PC-3 (cell line): ENCODE measurements at regions of chr12 and their contacts with region 1.

Region 1: GRCh38 chr12:17853054-17853453 is 236.9 kb downstream of the RERGL start:
- DNase-seq: no peak
- ATAC-seq: no peak
- H3K4me3 ChIP-seq: no peak overlapping the region
- H3K27ac ChIP-seq: no peak overlapping the region
- H3K4me1 ChIP-seq: no peaks in the 10 kb centered on the region
- H3K27me3 ChIP-seq: no peaks in the 10 kb centered on the region
- CTCF ChIP-seq: no peak

Region 2: GRCh38 chr12:17763366-17763765 is 89.7 kb before region 1 on chr12:
- CTCF ChIA-PET with region 1: no interaction called
- POLR2A ChIA-PET with region 1: no interaction called
- intact Hi-C with region 1: loop called (anchors 2 kb)
- DNase-seq: no peak
- ATAC-seq: no peak
- H3K4me3 ChIP-seq: no peak overlapping the region
- H3K27ac ChIP-seq: no peak overlapping the region
- H3K4me1 ChIP-seq: no peaks in the 10 kb centered on the region
- H3K27me3 ChIP-seq: no peaks in the 10 kb centered on the region
- CTCF ChIP-seq: no peak